Activated T-helper 1 cell treated with anti-CD3 and anti-CD28 coated beads, Interleukin-12 subunit alpha, Interleukin-12 subunit beta, Interleukin-2, Interleukin-4 antibody, amounts not matched to agents 30 ng/mL and 10 ng/mL and 1 ng/mL, durations not matched to agents 14 hours and 24 hours and 36 hours (primary cell): ENCODE measurements at regions of chr9 and their contacts with region 1.

Region 1: GRCh38 chr9:6428940-6429889 is 16.2 kb downstream of the UHRF2 start:
- DNase-seq: peak; percentile 40
- H3K4me3 Mint-ChIP-seq: peak overlapping the region; percentile 46
- H3K27ac Mint-ChIP-seq: peak overlapping the region; percentile 76
- H3K4me1 Mint-ChIP-seq: peaks cover 86% of the 10 kb centered on the region
- H3K27me3 Mint-ChIP-seq: no peaks in the 10 kb centered on the region

Region 2: GRCh38 chr9:6418764-6419163 is 10.5 kb before region 1 on chr9:
- intact Hi-C with region 1: loop called (anchors 1 kb)
- DNase-seq: no peak
- H3K4me3 Mint-ChIP-seq: peak overlapping the region; percentile 78
- H3K27ac Mint-ChIP-seq: peak overlapping the region; percentile 89
- H3K4me1 Mint-ChIP-seq: peaks cover 66% of the 10 kb centered on the region
- H3K27me3 Mint-ChIP-seq: no peaks in the 10 kb centered on the region

Region 3: DNA sequence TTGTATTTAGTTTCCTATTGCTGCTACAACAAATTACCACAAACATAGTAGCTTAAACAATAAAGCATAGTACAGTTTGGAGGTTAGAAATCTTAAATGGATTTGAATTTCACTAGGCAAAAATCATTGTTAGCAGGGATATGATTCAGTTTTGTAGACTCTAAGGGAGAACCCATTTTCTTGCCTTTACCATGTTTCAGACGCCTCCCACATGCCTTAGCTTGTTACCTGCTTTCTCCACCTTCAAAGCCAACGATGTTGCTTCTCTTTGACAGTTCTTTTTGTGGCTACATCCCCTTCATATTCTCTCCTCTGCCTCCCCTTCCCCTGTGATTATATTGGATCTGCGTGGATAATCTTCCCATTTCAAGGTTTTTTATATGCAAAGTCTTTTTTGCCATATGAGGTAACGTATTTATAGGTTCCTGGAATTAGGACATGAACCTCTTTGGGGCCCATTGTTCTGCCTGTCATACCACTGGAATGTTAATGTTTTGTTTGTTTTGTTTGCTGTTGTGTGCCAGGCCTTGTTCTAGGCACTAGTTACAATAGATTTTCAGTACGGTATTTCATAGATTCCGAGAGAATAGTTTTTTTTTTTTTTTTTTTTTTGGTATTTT is 37.9 kb after region 1 on chr9:
- intact Hi-C with region 1: loop called (anchors 5 kb)
- DNase-seq: no peak
- H3K4me3 Mint-ChIP-seq: no peak overlapping the region
- H3K27ac Mint-ChIP-seq: peak overlapping the region; percentile 8
- H3K4me1 Mint-ChIP-seq: peaks cover 25% of the 10 kb centered on the region
- H3K27me3 Mint-ChIP-seq: no peaks in the 10 kb centered on the region

Region 4: DNA sequence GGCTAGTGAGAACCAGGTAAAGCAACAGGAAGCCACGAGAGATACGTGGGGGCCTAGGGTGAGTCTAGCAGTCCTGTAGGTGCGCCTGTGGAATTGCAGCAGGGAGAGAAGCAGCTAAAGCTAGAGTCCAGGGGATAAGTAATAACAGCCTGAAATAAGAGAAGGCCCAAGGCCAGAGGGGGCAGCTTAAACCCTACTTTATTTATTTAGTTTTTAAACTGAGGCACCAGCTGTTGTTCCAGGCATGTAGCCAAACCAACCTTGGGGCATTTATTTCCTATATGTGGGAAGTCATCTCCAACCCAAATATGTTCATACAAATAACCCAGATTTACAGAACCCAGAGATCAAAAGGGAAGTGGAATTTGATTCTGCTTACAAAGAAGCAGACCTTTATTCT is 122.8 kb after region 1 on chr9:
- intact Hi-C with region 1: no loop called
- DNase-seq: no peak
- H3K4me3 Mint-ChIP-seq: no peak overlapping the region
- H3K27ac Mint-ChIP-seq: no peak overlapping the region
- H3K4me1 Mint-ChIP-seq: no peaks in the 10 kb centered on the region
- H3K27me3 Mint-ChIP-seq: no peaks in the 10 kb centered on the region